ENCODE measurements at regions of chr1 and their contacts with region 1.

Region 1: GRCh38 chr1:227318003-227318852 is at the start of gene CDC42BPA:
- DNase-seq: peak; percentile 95 to 99 (median 97)
- ATAC-seq: peak; percentile 80
- H3K4me3 ChIP-seq: peak within 1 kb of the TSS; percentile 77
- H3K27ac ChIP-seq: peak within 1 kb of the TSS; percentile 88
- H3K4me1 ChIP-seq: peaks cover 8 to 14% of the 10 kb centered on the region in 2 experiments; a peak in 4 of 5 replicates
- H3K27me3 ChIP-seq: no peaks in the 10 kb centered on the region
- CTCF ChIP-seq: 0 out of 6 replicates have a peak, but pooled peaks of 1 of the 3 experiments have one; percentile 5
- EP300 ChIP-seq: 0 out of 2 replicates have a peak, but pooled peaks have one; percentile 8
- POLR2A ChIP-seq: peak; percentile 83
- RAD21 ChIP-seq: 0 out of 4 replicates have a peak, but pooled peaks of 1 of the 2 experiments have one; percentile 3
- polyA plus RNA-seq, gene CDC42BPA: 8.0 to 52.1 TPM

Region 2: GRCh38 chr1:227131193-227131592 is 187.0 kb before region 1 on chr1:
- CTCF ChIA-PET with region 1: no interaction called
- POLR2A ChIA-PET with region 1: no interaction called
- in situ Hi-C with region 1: no loop called
- intact Hi-C with region 1: loop called (anchors 10 kb)
- DNase-seq: peak in 2 of 4 experiments; percentile 21 to 29
- ATAC-seq: peak; percentile 69
- H3K4me3 ChIP-seq: no peak overlapping the region
- H3K27ac ChIP-seq: no peak overlapping the region
- H3K4me1 ChIP-seq: peaks cover 0 to 4% of the 10 kb centered on the region in 2 experiments; a peak in 1 of 5 replicates
- H3K27me3 ChIP-seq: no peaks in the 10 kb centered on the region
- CTCF ChIP-seq: peak in 2 of 3 experiments; percentile 50 to 63; a peak in 4 of 6 replicates
- EP300 ChIP-seq: no peak
- POLR2A ChIP-seq: no peak
- RAD21 ChIP-seq: peak in 1 of 2 experiments; percentile 46; a peak in 2 of 4 replicates

Region 3: GRCh38 chr1:227260433-227260832 is 57.8 kb before region 1 on chr1:
- CTCF ChIA-PET with region 1: no interaction called
- POLR2A ChIA-PET with region 1: interaction called, 3 read pairs
- in situ Hi-C with region 1: no loop called
- intact Hi-C with region 1: loop called (anchors 5 kb)
- DNase-seq: peak; percentile 28 to 87 (median 63)
- ATAC-seq: peak; percentile 88
- H3K4me3 ChIP-seq: no peak overlapping the region
- H3K27ac ChIP-seq: peak overlapping the region; percentile 49; the same call in 1 of the 3 replicates
- H3K4me1 ChIP-seq: peaks cover 10 to 15% of the 10 kb centered on the region in 2 experiments; a peak in 4 of 5 replicates
- H3K27me3 ChIP-seq: no peaks in the 10 kb centered on the region
- CTCF ChIP-seq: no peak; a peak in 1 of 6 replicates
- EP300 ChIP-seq: peak; percentile 51; the same call in 1 of the 2 replicates
- POLR2A ChIP-seq: no peak
- RAD21 ChIP-seq: no peak

Region 4: DNA sequence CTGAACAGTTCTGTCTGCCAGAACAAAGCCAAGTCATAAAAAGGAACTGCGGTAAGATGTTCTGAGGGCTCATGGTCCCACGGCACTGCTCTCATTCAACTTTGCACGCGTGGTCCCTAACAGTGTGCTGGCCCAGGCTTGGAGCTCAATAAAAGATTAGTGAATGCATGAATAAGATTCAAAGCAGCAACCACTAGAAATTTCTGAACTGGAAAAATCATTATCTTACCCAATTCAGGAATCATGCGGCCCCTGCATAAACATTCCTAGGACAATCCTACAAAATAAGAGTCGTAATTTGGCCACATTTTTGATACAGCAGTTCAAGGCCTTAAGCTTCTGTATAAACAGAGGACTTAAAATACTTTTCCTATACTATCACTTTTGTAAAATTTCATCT is 12.5 kb after region 1 on chr1:
- CTCF ChIA-PET with region 1: no interaction called
- POLR2A ChIA-PET with region 1: interaction called, 31 read pairs
- in situ Hi-C with region 1: no loop called
- intact Hi-C with region 1: no loop called
- DNase-seq: no peak
- ATAC-seq: no peak
- H3K4me3 ChIP-seq: no peak overlapping the region
- H3K27ac ChIP-seq: no peak overlapping the region
- H3K4me1 ChIP-seq: peaks cover 4 to 16% of the 10 kb centered on the region in 2 experiments
- H3K27me3 ChIP-seq: no peaks in the 10 kb centered on the region
- CTCF ChIP-seq: no peak
- EP300 ChIP-seq: no peak
- POLR2A ChIP-seq: no peak
- RAD21 ChIP-seq: no peak

Region 5: GRCh38 chr1:227428803-227429202 is 110.6 kb after region 1 on chr1:
- CTCF ChIA-PET with region 1: no interaction called
- POLR2A ChIA-PET with region 1: interaction called, 4 read pairs
- in situ Hi-C with region 1: no loop called
- intact Hi-C with region 1: loop called (anchors 2 kb)
- DNase-seq: no peak
- ATAC-seq: no peak
- H3K4me3 ChIP-seq: no peak overlapping the region
- H3K27ac ChIP-seq: no peak overlapping the region
- H3K4me1 ChIP-seq: peaks cover 22 to 34% of the 10 kb centered on the region in 2 experiments
- H3K27me3 ChIP-seq: no peaks in the 10 kb centered on the region
- CTCF ChIP-seq: no peak
- EP300 ChIP-seq: no peak
- POLR2A ChIP-seq: no peak
- RAD21 ChIP-seq: no peak